ENCODE measurements at regions of chr4 and their contacts with region 1.

Region 1: DNA sequence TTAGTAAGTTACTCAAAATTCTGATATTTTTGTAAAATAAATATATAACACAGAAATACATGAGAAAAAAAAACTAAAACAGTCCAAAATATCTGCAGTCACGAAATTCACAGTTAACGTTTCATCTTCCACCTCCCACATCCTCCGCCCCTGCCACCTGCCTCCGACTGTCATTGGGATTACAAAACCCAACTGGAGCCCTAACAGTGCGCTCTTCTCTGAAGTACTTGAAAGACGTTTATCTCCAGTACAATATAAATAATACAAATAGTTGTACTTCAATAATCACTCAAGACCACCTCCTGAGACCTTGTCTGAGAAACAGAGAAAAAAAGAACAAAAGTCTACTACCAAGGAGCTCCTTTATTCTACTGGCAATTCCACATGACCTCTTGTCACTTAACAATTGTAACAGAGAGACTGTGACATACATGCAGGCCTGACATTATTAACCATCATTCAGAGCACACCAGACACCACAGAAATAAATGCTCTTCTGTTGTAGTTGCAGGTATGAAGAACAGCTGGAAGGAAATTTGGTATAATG is 280.6 kb downstream of the PPP3CA start:
- DNase-seq: no peak
- H3K4me3 ChIP-seq: no peak overlapping the region
- H3K27ac ChIP-seq: no peak overlapping the region
- H3K4me1 ChIP-seq: no peaks in the 10 kb centered on the region
- H3K27me3 ChIP-seq: no peaks in the 10 kb centered on the region
- CTCF ChIP-seq: no peak

Region 2: GRCh38 chr4:100938698-100939097 is 128.0 kb before region 1 on chr4:
- CTCF ChIA-PET with region 1: no interaction called
- POLR2A ChIA-PET with region 1: no interaction called
- intact Hi-C with region 1: no loop called
- DNase-seq: no peak
- H3K4me3 ChIP-seq: no peak overlapping the region
- H3K27ac ChIP-seq: no peak overlapping the region
- H3K4me1 ChIP-seq: no peaks in the 10 kb centered on the region
- H3K27me3 ChIP-seq: no peaks in the 10 kb centered on the region
- CTCF ChIP-seq: no peak

Region 3: GRCh38 chr4:101014417-101014816 is 52.3 kb before region 1 on chr4:
- CTCF ChIA-PET with region 1: interaction called, 11 read pairs
- POLR2A ChIA-PET with region 1: no interaction called
- intact Hi-C with region 1: no loop called
- DNase-seq: no peak
- H3K4me3 ChIP-seq: no peak overlapping the region
- H3K27ac ChIP-seq: no peak overlapping the region
- H3K4me1 ChIP-seq: peaks cover 2% of the 10 kb centered on the region
- H3K27me3 ChIP-seq: no peaks in the 10 kb centered on the region
- CTCF ChIP-seq: no peak

Measured in PC-9 (cell line).